ENCODE measurements at regions of chr19 and their contacts with region 1.

Region 1: GRCh38 chr19:17747205-17748098 is 3.8 kb upstream of the FCHO1 start:
- DNase-seq: peak; percentile 97
- ATAC-seq: peak; percentile 80
- H3K4me3 ChIP-seq: peak overlapping the region; percentile 38 to 72 (median 70)
- H3K4me3 Mint-ChIP-seq: peak overlapping the region; percentile 89
- H3K27ac ChIP-seq: peak overlapping the region in 1 of 2 donors; percentile 26
- H3K27ac Mint-ChIP-seq: peak overlapping the region; percentile 71
- H3K4me1 ChIP-seq: peaks cover 38 to 60% of the 10 kb centered on the region in 2 donors
- H3K4me1 Mint-ChIP-seq: peaks cover 51% of the 10 kb centered on the region
- H3K27me3 ChIP-seq: no peaks in the 10 kb centered on the region
- H3K27me3 Mint-ChIP-seq: no peaks in the 10 kb centered on the region
- CTCF ChIP-seq: no peak

Region 2: GRCh38 chr19:17370026-17370587 is 377.3 kb before region 1 on chr19:
- CTCF ChIA-PET with region 1: no interaction called
- POLR2A ChIA-PET with region 1: no interaction called
- intact Hi-C with region 1: no loop called
- DNase-seq: peak; percentile 86
- ATAC-seq: peak; percentile 92
- H3K4me3 ChIP-seq: no peak overlapping the region
- H3K4me3 Mint-ChIP-seq: peak overlapping the region; percentile 58
- H3K27ac ChIP-seq: peak overlapping the region in 1 of 2 donors; percentile 31
- H3K27ac Mint-ChIP-seq: peak overlapping the region; percentile 12
- H3K4me1 ChIP-seq: peaks cover 18 to 34% of the 10 kb centered on the region in 2 donors
- H3K4me1 Mint-ChIP-seq: peaks cover 21% of the 10 kb centered on the region
- H3K27me3 ChIP-seq: peaks cover 0 to 37% (median 13%) of the 10 kb centered on the region in 4 experiments
- H3K27me3 Mint-ChIP-seq: peaks cover 25% of the 10 kb centered on the region
- CTCF ChIP-seq: no peak

Region 3: DNA sequence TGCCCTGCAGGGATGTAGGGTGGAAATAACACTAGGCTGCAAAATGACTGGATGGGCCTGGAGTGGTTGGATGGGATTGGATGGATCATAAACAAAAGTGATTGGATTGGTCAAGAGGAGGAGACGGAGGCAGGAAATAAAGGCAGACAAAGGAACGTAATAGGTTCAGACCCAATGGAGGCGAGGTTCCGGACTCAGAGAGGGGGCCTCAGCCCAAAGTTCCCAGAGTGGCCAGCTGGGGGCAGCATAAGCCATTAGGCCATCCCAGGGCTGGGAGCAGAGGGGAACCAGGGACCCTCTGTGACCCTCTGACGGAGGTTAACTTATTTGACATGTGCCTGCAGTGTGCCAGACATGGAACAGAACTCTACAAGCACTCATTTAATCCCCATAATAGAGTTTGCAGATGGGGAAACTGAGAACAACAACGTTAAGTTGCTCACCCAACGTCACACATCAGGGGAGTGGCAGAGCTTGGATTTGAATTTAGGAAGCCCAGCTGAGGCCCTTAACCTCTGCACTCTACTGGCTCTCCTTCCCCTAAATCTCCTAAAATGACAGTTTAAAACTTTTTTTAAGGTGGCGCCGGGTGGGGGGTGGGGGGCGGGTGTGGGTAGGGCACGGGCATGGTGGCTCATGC is 43.5 kb before region 1 on chr19:
- CTCF ChIA-PET with region 1: interaction called, 5 read pairs
- POLR2A ChIA-PET with region 1: no interaction called
- intact Hi-C with region 1: loop called (anchors 5 kb)
- DNase-seq: peak; percentile 80
- ATAC-seq: peak; percentile 93
- H3K4me3 ChIP-seq: no peak overlapping the region
- H3K4me3 Mint-ChIP-seq: no peak overlapping the region
- H3K27ac ChIP-seq: no peak overlapping the region
- H3K27ac Mint-ChIP-seq: peak overlapping the region; percentile 11
- H3K4me1 ChIP-seq: no peaks in the 10 kb centered on the region
- H3K4me1 Mint-ChIP-seq: peaks cover 5% of the 10 kb centered on the region
- H3K27me3 ChIP-seq: peaks cover 0 to 9% (median under 1%) of the 10 kb centered on the region in 4 experiments
- H3K27me3 Mint-ChIP-seq: peaks cover 11% of the 10 kb centered on the region
- CTCF ChIP-seq: peak; percentile 87

Region 4: GRCh38 chr19:17718947-17719711 is 28.3 kb before region 1 on chr19 and contains the start of gene MAP1S:
- CTCF ChIA-PET with region 1: interaction called, 4 read pairs
- POLR2A ChIA-PET with region 1: interaction called, 11 read pairs
- intact Hi-C with region 1: loop called (anchors 1 kb)
- DNase-seq: peak; percentile 72
- ATAC-seq: peak; percentile 93
- H3K4me3 ChIP-seq: peak within 1 kb of the TSS; percentile 78 to 94 (median 88)
- H3K4me3 Mint-ChIP-seq: peak within 1 kb of the TSS; percentile 92
- H3K27ac ChIP-seq: peak within 1 kb of the TSS; percentile 27 to 73
- H3K27ac Mint-ChIP-seq: peak within 1 kb of the TSS; percentile 82
- H3K4me1 ChIP-seq: peaks cover 32 to 39% of the 10 kb centered on the region in 2 donors
- H3K4me1 Mint-ChIP-seq: peaks cover 36% of the 10 kb centered on the region
- H3K27me3 ChIP-seq: no peaks in the 10 kb centered on the region
- H3K27me3 Mint-ChIP-seq: no peaks in the 10 kb centered on the region
- CTCF ChIP-seq: no peak
- total RNA-seq, gene MAP1S: 81.6 and 83.0 TPM in 2 replicates

Region 5: DNA sequence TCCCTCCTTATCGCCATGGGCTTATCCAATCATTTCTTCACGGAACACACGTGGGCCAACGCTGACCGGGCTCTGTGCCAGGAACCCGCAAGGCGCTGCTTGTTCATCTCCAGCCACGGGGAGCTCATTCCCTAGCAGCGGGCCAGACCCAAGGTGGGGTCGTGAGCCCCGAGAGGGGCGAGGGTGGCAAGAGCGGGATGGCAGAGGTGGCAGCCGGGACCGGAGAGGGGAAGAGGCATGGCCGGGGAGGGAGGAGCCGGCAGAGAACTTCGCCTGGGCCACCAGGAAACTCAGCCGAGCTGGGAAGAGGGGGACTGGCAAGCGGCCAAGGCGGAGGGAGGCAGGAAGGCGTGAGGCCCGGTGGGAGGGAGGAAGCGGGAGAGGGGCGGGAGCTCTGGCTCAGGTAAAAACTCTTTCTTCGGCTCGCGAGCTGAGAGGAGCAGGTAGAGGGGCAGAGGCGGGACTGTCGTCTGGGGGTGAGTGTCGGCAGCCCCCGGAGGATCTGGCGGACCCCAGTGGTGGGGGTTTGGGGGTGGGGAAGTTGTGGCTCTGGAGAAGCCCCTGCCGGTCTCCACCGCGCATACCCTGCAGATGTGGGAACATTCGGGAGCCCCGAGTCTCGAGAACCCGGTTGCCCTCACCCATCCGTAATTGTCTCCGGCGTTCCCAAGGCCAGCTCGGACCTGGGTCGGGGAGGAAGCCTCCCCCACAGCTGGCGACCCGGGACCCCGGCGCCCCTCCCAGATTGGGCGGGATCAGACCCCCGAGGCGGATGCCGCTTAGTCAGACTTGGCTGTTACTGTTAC is 47.5 kb after region 1 on chr19 and contains the start of gene B3GNT3:
- CTCF ChIA-PET with region 1: interaction called, 4 read pairs
- POLR2A ChIA-PET with region 1: interaction called, 12 read pairs
- intact Hi-C with region 1: no loop called
- DNase-seq: no peak
- ATAC-seq: no peak
- H3K4me3 ChIP-seq: peak within 1 kb of the TSS in 1 of 5 experiments; percentile 18
- H3K4me3 Mint-ChIP-seq: peak within 1 kb of the TSS; percentile 45
- H3K27ac ChIP-seq: no peak within 1 kb of the TSS
- H3K27ac Mint-ChIP-seq: no peak within 1 kb of the TSS
- H3K4me1 ChIP-seq: peaks cover 31 to 32% of the 10 kb centered on the region in 2 donors
- H3K4me1 Mint-ChIP-seq: peaks cover 43% of the 10 kb centered on the region
- H3K27me3 ChIP-seq: peaks cover 0 to 43% (median 22%) of the 10 kb centered on the region in 4 experiments
- H3K27me3 Mint-ChIP-seq: peaks cover 14% of the 10 kb centered on the region
- CTCF ChIP-seq: no peak
- total RNA-seq, gene B3GNT3: not detected in 2 replicates

Measured in B cell (primary cell).